Naive thymus-derived CD4-positive, alpha-beta T cell (primary cell): ENCODE measurements at regions of chr9 and their contacts with region 1.

Region 1: DNA sequence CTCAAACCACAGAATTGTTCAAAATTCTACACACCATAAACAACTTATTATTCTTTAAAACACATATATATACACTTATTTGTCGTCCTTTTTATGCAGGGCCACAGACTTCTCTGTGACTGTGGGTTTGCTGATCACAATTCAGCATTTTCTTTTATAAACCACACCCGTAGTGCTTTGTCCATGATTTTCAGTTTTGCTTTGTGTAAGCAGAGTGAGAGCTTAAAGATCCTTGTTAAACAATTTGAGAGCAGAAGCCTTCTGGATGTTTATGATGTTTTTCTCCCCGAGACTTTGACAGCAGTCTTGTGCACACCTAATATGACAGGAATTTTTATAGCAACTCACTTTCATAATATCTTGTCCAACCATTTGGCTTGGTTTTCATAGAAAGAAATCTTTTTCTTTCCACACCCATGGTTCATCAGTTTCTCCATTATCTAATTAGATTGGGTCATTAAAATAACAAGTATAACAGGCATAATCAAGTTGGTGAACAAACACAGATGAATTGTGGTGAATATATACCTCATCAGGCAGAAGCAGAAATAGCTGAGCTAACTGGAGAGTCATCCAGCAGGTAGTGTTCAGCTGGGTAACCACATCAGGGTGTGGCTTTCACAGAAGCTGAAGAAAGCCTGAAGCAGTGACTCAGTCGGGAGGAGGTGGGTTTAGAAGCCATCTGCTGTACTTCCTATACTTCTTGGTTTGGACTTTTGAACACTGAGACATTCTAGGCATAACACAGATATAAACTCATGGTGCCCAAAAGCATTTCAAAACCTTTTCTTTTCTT is 232.8 kb downstream of the DOCK8 start:
- DNase-seq: peak in 8 of 9 donors; percentile 27 to 60 (median 55)
- ATAC-seq: peak; percentile 96
- H3K4me3 ChIP-seq: no peak overlapping the region
- H3K4me3 Mint-ChIP-seq: peak overlapping the region in 3 of 10 donors; percentile 17 to 60 (median 32)
- H3K27ac ChIP-seq: no peak overlapping the region
- H3K27ac Mint-ChIP-seq: peak overlapping the region; percentile 35 to 85 (median 66)
- H3K4me1 ChIP-seq: peaks cover 11 to 14% of the 10 kb centered on the region in 2 donors
- H3K4me1 Mint-ChIP-seq: peaks cover 11 to 46% (median 22%) of the 10 kb centered on the region in 7 donors
- H3K27me3 ChIP-seq: no peaks in the 10 kb centered on the region
- H3K27me3 Mint-ChIP-seq: no peaks in the 10 kb centered on the region

Region 2: DNA sequence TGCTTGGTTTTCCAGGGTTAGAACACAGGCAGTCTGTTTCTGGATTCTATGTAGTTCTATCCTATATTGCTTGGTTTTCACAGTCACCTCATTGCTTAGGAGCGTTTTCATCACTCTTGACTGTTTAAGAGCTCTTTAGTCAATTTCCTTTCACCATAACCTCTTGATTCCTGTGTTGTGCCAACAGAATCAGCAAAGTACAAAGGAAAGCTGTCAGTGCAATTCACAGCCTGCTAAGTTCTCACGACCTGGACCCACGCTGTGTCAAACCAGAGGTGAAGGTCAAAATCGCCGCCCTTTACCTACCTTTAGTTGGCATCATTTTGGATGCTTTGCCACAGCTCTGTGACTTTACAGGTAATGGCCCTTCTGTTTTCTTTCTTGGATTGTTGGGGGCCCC is 32.8 kb before region 1 on chr9:
- CTCF ChIA-PET with region 1: no interaction called
- POLR2A ChIA-PET with region 1: no interaction called
- intact Hi-C with region 1: loop called (anchors 5 kb)
- DNase-seq: no peak
- ATAC-seq: no peak
- H3K4me3 ChIP-seq: no peak overlapping the region
- H3K4me3 Mint-ChIP-seq: no peak overlapping the region
- H3K27ac ChIP-seq: no peak overlapping the region
- H3K27ac Mint-ChIP-seq: peak overlapping the region in 4 of 9 donors; percentile 9 to 53 (median 32)
- H3K4me1 ChIP-seq: no peaks in the 10 kb centered on the region
- H3K4me1 Mint-ChIP-seq: peaks cover 0 to 3% (median 0%) of the 10 kb centered on the region in 7 donors
- H3K27me3 ChIP-seq: no peaks in the 10 kb centered on the region
- H3K27me3 Mint-ChIP-seq: no peaks in the 10 kb centered on the region

Region 3: DNA sequence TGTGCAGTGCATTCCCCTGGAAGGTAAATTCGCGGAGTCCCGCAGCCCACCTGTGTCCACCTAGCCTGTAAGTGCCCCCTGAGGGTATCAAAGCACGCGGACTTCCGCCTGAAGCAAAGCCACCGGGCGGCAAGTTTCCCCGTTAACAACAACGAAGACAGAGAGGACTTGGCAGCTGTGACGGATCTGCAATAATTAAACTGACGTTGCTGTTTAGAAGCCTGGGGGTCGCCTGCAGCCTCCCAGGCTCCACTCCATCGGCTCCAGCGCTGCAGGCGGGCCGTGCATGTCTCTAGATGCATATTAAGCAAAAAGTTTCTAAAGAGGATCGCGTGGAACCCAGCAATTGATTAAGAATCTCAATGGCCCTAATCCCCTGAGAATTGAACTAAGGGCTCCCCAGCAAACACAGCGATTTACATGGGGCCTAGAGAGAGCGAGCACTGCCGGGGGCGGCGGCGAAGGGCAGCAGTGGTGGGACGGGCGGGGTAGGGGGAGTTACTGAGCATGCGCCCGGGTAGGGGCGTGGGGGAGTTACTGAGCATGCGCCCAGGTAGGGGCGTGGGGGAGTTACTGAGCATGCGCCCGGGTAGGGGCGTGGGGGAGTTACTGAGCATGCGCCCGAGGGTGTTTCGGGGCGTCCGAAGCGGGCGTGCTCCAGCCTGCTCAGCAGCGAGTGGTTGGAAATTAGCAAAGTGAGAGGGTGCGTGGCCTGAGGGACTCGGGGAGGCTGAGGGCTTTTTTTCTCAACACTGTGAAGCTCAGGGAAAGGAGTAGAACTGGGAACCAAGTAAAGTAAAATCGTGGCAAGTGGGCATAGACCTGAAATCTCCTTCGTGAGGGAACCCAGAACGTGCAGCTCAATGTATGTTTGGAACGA is 22.5 kb after region 1 on chr9:
- CTCF ChIA-PET with region 1: no interaction called
- POLR2A ChIA-PET with region 1: interaction called, 3 read pairs
- intact Hi-C with region 1: loop called (anchors 1 kb)
- DNase-seq: peak; percentile 82 to 92 (median 89)
- ATAC-seq: peak; percentile 93
- H3K4me3 ChIP-seq: peak overlapping the region; percentile 84
- H3K4me3 Mint-ChIP-seq: peak overlapping the region; percentile 92 to 99 (median 97)
- H3K27ac ChIP-seq: peak overlapping the region; percentile 75
- H3K27ac Mint-ChIP-seq: peak overlapping the region; percentile 88 to 99 (median 94)
- H3K4me1 ChIP-seq: peaks cover 0 to 6% of the 10 kb centered on the region in 2 donors
- H3K4me1 Mint-ChIP-seq: peaks cover 17 to 32% (median 27%) of the 10 kb centered on the region in 7 donors
- H3K27me3 ChIP-seq: no peaks in the 10 kb centered on the region
- H3K27me3 Mint-ChIP-seq: no peaks in the 10 kb centered on the region

Region 4: DNA sequence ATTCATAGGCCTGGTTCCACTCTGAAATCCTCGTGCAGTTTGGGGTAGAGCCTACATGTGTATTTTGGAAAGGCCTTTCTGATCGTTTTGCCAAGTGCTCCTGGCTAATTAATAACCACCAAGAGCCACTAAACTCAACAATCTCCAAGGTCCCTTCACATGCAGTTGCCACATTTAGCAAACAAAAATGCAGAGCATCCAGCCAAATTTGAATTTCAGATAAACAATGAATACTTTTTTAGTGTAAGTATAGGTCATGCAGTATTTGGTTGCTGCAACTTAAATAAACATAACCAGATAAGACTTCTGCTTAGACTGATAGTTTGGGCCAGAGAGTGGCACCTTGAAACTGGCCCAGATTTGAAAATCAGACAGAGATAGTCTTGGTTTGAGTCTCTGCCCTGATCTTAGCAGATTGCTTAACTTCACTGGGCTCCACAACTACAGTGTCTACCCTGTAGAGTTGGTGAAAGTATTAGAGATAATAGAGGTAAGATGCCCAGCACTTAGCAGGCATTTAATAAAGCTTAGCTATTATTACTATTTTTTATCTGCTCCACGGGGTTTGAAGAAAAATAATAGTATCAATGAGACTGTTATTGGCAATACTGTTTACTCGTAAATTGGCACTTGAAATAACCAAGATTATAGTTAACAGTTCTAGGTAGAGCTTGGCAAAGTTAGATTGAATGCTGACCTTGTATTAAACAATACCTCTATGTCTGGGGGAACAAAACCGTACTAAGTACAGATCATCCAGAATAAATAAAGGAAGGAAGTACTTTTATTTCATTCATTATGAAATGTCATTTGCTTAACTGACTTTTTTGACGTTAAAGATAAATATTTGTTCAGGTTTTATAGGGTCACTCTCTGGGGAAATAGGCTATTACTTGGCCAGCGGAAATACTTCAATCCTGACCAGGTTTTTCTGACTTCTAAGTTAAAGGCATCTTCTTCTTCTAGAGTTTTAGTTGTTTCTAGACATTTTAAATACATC is 42.1 kb after region 1 on chr9:
- CTCF ChIA-PET with region 1: no interaction called
- POLR2A ChIA-PET with region 1: no interaction called
- intact Hi-C with region 1: no loop called
- DNase-seq: no peak
- ATAC-seq: no peak
- H3K4me3 ChIP-seq: no peak overlapping the region
- H3K4me3 Mint-ChIP-seq: no peak overlapping the region
- H3K27ac ChIP-seq: no peak overlapping the region
- H3K27ac Mint-ChIP-seq: no peak overlapping the region
- H3K4me1 ChIP-seq: no peaks in the 10 kb centered on the region
- H3K4me1 Mint-ChIP-seq: peaks cover 0 to 3% (median 0%) of the 10 kb centered on the region in 7 donors
- H3K27me3 ChIP-seq: no peaks in the 10 kb centered on the region
- H3K27me3 Mint-ChIP-seq: no peaks in the 10 kb centered on the region

Region 5: GRCh38 chr9:536597-537511 is 89.4 kb after region 1 on chr9:
- CTCF ChIA-PET with region 1: no interaction called
- POLR2A ChIA-PET with region 1: no interaction called
- intact Hi-C with region 1: loop called in 1 of 2 experiments (anchors 1 kb)
- DNase-seq: peak in 3 of 9 donors; percentile 8 to 19 (median 12)
- ATAC-seq: no peak
- H3K4me3 ChIP-seq: peak overlapping the region; percentile 33
- H3K4me3 Mint-ChIP-seq: peak overlapping the region; percentile 50 to 81 (median 63)
- H3K27ac ChIP-seq: peak overlapping the region; percentile 51
- H3K27ac Mint-ChIP-seq: peak overlapping the region in 8 of 9 donors; percentile 63 to 96 (median 89)
- H3K4me1 ChIP-seq: peaks cover 0 to 4% of the 10 kb centered on the region in 2 donors
- H3K4me1 Mint-ChIP-seq: peaks cover 7 to 37% (median 14%) of the 10 kb centered on the region in 7 donors
- H3K27me3 ChIP-seq: no peaks in the 10 kb centered on the region
- H3K27me3 Mint-ChIP-seq: peaks cover 0 to 3% (median 0%) of the 10 kb centered on the region in 5 donors

Region 6: DNA sequence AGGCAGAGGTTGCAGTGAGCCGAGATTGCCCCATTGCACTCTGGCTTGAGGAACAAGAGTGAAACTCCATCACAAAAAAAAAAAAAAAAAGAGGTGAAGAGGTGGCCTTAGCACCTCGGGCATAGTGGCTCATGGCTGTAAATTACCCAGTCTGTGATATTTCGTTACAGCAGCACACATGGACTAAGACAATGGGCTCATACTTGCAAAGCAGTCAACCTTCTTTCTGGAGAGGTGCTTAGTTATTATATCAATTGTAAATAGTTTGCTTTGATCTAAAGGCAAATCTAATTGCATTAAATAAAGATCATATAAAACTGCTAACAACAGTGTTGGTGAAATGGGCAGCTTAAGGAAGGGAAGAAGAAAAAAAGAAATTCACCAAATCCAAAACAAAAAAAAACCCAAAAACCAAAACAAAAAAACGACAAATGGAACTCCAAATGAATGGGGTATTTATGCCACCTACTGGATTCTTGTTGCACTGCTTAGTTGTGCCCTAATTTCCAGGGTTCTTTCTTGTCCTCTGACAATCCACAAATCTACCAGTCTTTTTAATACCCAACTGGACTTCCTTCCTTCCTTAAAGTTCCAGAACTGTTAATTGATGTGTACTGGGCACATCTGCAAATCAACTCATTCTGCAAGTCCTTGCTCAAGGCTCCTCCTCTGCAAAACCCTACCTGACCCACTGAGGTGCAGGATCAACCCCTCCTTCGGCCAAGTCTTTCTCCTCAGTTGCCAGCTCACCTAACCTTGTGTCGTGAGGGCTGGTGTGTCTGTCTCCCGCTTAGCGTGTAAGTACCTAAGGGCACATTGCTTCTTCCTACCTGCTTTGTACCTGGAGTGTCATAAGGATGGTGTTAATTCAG is 359.1 kb after region 1 on chr9:
- CTCF ChIA-PET with region 1: no interaction called
- POLR2A ChIA-PET with region 1: no interaction called
- intact Hi-C with region 1: loop called in 1 of 2 experiments (anchors 2 kb)
- DNase-seq: peak in 4 of 9 donors; percentile 12 to 35 (median 29)
- ATAC-seq: peak; percentile 41
- H3K4me3 ChIP-seq: no peak overlapping the region
- H3K4me3 Mint-ChIP-seq: no peak overlapping the region
- H3K27ac ChIP-seq: no peak overlapping the region
- H3K27ac Mint-ChIP-seq: no peak overlapping the region
- H3K4me1 ChIP-seq: no peaks in the 10 kb centered on the region
- H3K4me1 Mint-ChIP-seq: no peaks in the 10 kb centered on the region
- H3K27me3 ChIP-seq: no peaks in the 10 kb centered on the region
- H3K27me3 Mint-ChIP-seq: peaks cover 5 to 27% (median 10%) of the 10 kb centered on the region in 5 donors